ENCODE measurements at regions of chr1 and their contacts with region 1.

Region 1: DNA sequence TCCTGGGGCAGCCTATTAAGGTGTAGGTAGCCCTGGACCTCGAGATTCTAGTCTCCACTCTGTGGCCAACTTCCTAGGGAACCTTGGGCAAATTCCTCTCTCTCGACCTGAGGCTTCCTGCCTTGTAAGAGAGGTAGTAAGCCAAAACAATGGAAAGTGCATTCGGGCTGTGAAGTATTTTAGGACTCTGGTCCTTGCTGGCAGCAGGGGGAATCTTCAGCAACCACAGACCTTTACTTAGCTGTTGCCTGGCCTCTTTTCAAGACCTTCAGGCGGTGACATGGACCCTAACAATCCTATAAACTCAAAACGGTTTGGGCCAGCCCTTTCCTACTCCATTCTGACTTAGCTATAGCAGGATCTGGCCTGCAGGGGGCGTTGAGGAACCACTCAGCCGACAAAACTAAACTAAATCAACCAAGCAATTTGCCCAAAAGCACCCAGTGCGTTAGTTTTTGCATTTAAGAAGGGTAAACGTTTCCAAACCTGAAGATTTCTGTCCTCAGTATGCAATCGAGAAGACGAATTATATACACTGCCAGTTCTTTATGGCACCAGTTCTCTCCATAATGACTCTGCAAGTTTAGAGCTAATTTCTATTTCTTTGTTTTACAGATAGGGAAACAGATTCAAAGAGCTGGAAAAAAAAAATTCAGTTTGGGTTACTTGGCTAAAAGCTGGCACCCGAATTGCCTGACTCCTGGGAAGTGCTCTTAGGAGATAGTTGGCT is 10.9 kb upstream of the SESN2 start:
- DNase-seq: peak; percentile 96
- H3K4me3 ChIP-seq: peak overlapping the region in 3 of 4 donors; percentile 25 to 29 (median 29)
- H3K27ac ChIP-seq: peak overlapping the region; percentile 83 to 91 (median 86)
- H3K4me1 ChIP-seq: peaks cover 22 to 36% (median 29%) of the 10 kb centered on the region in 4 donors
- H3K27me3 ChIP-seq: no peaks in the 10 kb centered on the region
- CTCF ChIP-seq: peak; percentile 94 to 96 (median 96)
- EP300 ChIP-seq: no peak
- POLR2A ChIP-seq: no peak

Region 2: GRCh38 chr1:27891196-27891889 is 357.1 kb before region 1 on chr1:
- intact Hi-C with region 1: no loop called
- DNase-seq: no peak
- H3K4me3 ChIP-seq: no peak overlapping the region
- H3K27ac ChIP-seq: peak overlapping the region; percentile 1 to 62 (median 17)
- H3K4me1 ChIP-seq: no peaks in the 10 kb centered on the region
- H3K27me3 ChIP-seq: no peaks in the 10 kb centered on the region
- CTCF ChIP-seq: no peak
- EP300 ChIP-seq: peak; percentile 23
- POLR2A ChIP-seq: no peak

Region 3: GRCh38 chr1:28160782-28161266 is 87.6 kb before region 1 on chr1:
- intact Hi-C with region 1: no loop called
- DNase-seq: no peak
- H3K4me3 ChIP-seq: no peak overlapping the region
- H3K27ac ChIP-seq: peak overlapping the region; percentile 40 to 64 (median 42)
- H3K4me1 ChIP-seq: peaks cover 3 to 24% (median 15%) of the 10 kb centered on the region in 4 donors
- H3K27me3 ChIP-seq: no peaks in the 10 kb centered on the region
- CTCF ChIP-seq: no peak
- EP300 ChIP-seq: no peak
- POLR2A ChIP-seq: no peak

Region 4: DNA sequence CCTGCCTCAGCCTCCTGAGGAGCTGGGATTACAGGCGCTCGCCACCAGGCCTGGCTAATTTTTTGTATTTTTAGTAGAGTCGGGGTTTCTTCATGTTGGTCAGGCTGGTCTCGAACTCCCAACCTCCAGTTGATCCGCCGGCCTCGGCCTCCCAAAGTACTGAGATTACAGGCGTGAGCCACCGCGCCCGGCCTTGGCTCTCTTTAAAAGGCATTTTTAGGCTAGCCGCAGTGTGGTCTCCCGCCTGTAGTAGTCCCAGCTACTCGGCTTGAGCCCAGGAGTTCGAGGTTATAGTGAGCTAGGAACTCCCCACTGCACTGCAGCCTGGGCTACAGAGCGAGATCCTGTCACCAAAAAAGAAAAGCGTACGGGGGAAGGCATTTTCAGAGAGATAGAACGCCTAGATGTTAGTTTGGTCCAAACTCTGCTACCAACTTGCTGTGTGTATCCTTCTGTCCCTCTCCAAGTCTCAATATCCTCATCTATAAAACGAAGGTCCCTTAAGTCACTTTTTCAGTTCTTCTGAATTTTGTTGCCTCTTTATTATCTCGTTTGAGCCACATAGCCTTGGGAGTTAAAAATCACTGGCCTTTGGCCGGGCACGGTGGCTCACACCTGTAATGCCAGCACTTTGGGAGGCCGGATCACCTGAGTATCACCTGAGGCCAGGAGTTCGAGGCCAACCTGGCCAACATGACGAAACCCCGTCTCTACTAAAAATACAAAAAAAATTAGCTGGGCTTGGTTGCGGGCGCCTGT is 81.1 kb after region 1 on chr1:
- intact Hi-C with region 1: loop called (anchors 5 kb)
- DNase-seq: no peak
- H3K4me3 ChIP-seq: peak overlapping the region; percentile 61 to 69 (median 64)
- H3K27ac ChIP-seq: peak overlapping the region; percentile 80 to 90 (median 83)
- H3K4me1 ChIP-seq: peaks cover 15 to 25% (median 21%) of the 10 kb centered on the region in 4 donors
- H3K27me3 ChIP-seq: no peaks in the 10 kb centered on the region
- CTCF ChIP-seq: no peak
- EP300 ChIP-seq: no peak
- POLR2A ChIP-seq: no peak

Region 5: GRCh38 chr1:28378906-28379305 is 130.5 kb after region 1 on chr1:
- intact Hi-C with region 1: no loop called
- DNase-seq: no peak
- H3K4me3 ChIP-seq: no peak overlapping the region
- H3K27ac ChIP-seq: no peak overlapping the region
- H3K4me1 ChIP-seq: peaks cover 0 to 10% (median 8%) of the 10 kb centered on the region in 4 donors
- H3K27me3 ChIP-seq: no peaks in the 10 kb centered on the region
- CTCF ChIP-seq: no peak
- EP300 ChIP-seq: no peak
- POLR2A ChIP-seq: no peak

Region 6: DNA sequence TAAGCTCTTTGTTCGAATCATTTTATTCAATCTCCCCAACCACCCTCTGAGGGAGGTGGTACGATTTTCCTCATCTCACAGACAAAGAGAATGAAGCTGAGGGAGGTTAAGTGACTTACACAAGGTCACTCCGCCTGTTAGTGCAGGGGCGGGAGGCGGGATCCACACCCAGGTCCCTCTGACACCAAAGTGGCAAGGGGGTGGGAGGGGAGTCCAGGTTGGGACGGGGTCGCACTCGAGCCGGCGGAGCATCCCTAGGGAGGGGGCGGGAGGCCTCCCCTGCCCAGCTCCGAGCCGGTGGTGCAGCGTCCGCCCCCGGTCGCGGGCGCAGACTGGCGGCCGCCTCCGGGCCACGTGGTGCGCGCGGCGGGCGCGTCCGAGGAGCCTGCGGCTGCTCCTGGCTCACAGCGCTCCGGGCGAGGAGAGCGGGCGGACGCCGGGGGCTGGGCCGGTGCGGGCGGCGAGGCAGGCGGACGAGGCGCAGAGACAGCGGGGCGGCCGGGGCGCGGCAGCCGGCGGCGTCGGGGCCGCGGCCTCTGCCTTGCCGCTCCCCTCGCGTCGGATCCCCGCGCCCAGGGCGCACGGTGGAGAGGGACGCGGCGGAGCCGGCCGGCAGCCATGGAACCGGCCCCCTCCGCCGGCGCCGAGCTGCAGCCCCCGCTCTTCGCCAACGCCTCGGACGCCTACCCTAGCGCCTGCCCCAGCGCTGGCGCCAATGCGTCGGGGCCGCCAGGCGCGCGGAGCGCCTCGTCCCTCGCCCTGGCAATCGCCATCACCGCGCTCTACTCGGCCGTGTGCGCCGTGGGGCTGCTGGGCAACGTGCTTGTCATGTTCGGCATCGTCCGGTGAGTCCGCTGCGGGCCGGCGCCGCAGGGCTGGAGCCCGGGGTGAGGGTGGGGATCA is 563.6 kb after region 1 on chr1 and contains the start of gene OPRD1:
- intact Hi-C with region 1: no loop called
- DNase-seq: no peak
- H3K4me3 ChIP-seq: peak within 1 kb of the TSS in 1 of 4 donors; percentile 9
- H3K27ac ChIP-seq: no peak within 1 kb of the TSS
- H3K4me1 ChIP-seq: peaks cover 0 to 11% (median 3%) of the 10 kb centered on the region in 4 donors
- H3K27me3 ChIP-seq: peaks cover 0 to 75% (median 16%) of the 10 kb centered on the region in 4 donors
- CTCF ChIP-seq: no peak
- EP300 ChIP-seq: no peak
- POLR2A ChIP-seq: no peak
- total RNA-seq, gene OPRD1: under 0.01 to 0.23 (median 0.15) TPM

Measured in esophagus muscularis mucosa (tissue), 4 donors.